ENCODE measurements at regions of chr11 and their contacts with region 1.

Region 1: GRCh38 chr11:74138572-74138971 is 32.2 kb downstream of the C2CD3 start:
- DNase-seq: peak; percentile 53
- H3K4me3 Mint-ChIP-seq: peak overlapping the region; percentile 3
- H3K27ac Mint-ChIP-seq: peak overlapping the region; percentile 68
- H3K4me1 Mint-ChIP-seq: peaks cover 46% of the 10 kb centered on the region
- H3K27me3 Mint-ChIP-seq: no peaks in the 10 kb centered on the region
- CTCF ChIP-seq: no peak

Region 2: GRCh38 chr11:74069147-74070047 is 69.2 kb before region 1 on chr11:
- CTCF ChIA-PET with region 1: no interaction called
- intact Hi-C with region 1: loop called (anchors 5 kb)
- DNase-seq: peak; percentile 61
- H3K4me3 Mint-ChIP-seq: no peak overlapping the region
- H3K27ac Mint-ChIP-seq: peak overlapping the region; percentile 34
- H3K4me1 Mint-ChIP-seq: peaks cover 68% of the 10 kb centered on the region
- H3K27me3 Mint-ChIP-seq: no peaks in the 10 kb centered on the region
- CTCF ChIP-seq: no peak

Region 3: GRCh38 chr11:74170694-74171629 is 32.4 kb after region 1 on chr11 and contains the starts of genes C2CD3 and PPME1:
- CTCF ChIA-PET with region 1: interaction called, 8 read pairs
- intact Hi-C with region 1: loop called (anchors 2 kb)
- DNase-seq: peak; percentile 97
- H3K4me3 Mint-ChIP-seq: no peak within 1 kb of the TSS
- H3K27ac Mint-ChIP-seq: no peak within 1 kb of the TSS
- H3K4me1 Mint-ChIP-seq: no peaks in the 10 kb centered on the region
- H3K27me3 Mint-ChIP-seq: no peaks in the 10 kb centered on the region
- CTCF ChIP-seq: no peak
- total RNA-seq, gene C2CD3: 22.2 and 26.9 TPM in 2 replicates
- total RNA-seq, gene PPME1: 48.0 and 55.0 TPM in 2 replicates

Region 4: DNA sequence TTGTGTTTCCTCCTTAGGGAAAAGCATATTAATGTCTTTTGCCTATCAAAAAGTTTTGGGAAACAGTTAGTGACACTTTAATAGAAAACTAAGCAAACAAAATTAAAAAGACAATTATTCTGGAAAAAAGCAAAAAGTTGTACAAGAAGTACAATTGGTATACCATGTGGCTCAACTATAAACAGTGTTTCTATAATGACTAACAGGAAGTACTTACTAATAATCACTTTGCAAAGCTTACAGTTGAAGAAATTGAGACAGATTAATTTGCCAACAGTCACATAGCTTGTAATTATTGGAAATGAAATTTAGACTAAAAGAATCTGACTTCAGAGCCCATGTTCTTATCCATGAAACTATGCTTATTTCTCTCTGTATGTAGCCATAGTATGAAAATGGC is 57.3 kb after region 1 on chr11:
- CTCF ChIA-PET with region 1: no interaction called
- intact Hi-C with region 1: no loop called
- DNase-seq: no peak
- H3K4me3 Mint-ChIP-seq: no peak overlapping the region
- H3K27ac Mint-ChIP-seq: no peak overlapping the region
- H3K4me1 Mint-ChIP-seq: no peaks in the 10 kb centered on the region
- H3K27me3 Mint-ChIP-seq: no peaks in the 10 kb centered on the region
- CTCF ChIP-seq: no peak

Region 5: DNA sequence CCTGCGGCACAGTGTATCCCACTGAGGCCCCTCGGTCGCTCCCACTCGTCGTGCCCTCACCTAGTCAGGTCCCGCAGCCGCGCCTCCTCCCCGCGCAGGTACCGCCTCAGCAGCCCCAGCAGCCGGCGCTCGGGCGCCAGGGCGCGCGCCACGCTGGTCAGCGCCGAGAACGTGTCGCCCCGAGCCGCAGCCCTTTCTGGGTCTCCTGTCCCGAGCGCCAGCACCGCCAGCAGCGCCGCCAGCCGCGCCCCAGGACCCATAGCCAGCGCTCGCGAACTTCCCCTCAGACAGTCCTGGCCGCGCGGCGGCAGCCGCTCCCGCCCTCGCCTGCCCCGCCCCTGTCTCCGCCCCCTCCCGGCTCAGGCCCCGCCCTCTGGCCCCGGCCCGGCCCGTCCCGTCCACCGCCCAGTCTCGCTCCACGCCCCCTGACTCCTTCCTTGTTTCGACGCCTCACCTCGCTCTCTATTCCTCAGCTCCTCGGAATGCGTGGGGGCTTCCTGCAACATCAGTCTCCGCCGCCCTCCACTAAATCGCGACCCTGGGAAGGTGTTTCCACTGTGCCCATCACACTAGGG is 172.9 kb after region 1 on chr11 and contains the start of gene P4HA3:
- CTCF ChIA-PET with region 1: no interaction called
- intact Hi-C with region 1: no loop called
- DNase-seq: peak; percentile 64
- H3K4me3 Mint-ChIP-seq: peak within 1 kb of the TSS; percentile 74
- H3K27ac Mint-ChIP-seq: no peak within 1 kb of the TSS
- H3K4me1 Mint-ChIP-seq: no peaks in the 10 kb centered on the region
- H3K27me3 Mint-ChIP-seq: peaks cover 81% of the 10 kb centered on the region
- CTCF ChIP-seq: no peak
- total RNA-seq, gene P4HA3: not detected in 2 replicates